Heart left ventricle (tissue), 16 donors: ENCODE measurements at regions of chr6 and their contacts with region 1.

Region 1: DNA sequence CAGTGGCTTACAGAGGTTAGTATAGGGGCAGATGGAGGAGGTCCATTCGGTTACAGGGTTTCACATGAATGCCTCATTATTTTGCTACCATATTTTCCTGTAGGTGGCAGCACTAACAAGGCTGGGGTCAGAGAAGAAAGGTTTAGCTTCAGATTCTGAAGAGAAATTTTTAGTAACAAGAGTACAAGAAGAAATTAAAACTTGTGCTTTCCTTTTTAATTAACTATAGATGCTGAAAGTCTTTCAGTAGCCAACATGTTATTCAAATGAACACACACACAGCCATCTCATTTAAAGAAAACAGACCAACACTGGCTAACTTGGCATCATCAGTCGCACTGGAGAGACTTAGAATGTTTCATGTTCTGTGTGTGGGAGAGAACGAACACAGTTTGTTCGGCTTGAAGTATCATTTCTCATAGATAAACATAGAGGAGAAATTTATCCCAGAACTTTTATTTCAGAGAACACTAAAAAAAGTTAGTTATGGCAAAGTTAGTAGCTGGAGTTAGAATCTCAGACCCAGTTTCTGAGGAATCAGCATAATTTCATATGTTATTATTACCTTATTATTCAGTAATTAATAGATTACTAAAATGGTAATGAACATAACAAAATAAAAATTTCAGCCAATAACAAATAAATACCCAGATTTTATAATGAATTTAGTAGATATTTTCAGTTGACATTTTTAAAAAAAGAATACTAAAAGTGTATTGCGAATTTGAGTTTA is 314.0 kb upstream of the RSPO3 start:
- DNase-seq: peak in 1 of 5 donors; percentile 19
- ATAC-seq: peak in 3 of 4 donors; percentile 45 to 56 (median 52)
- H3K4me3 ChIP-seq: no peak overlapping the region
- H3K27ac ChIP-seq: no peak overlapping the region
- H3K4me1 ChIP-seq: no peaks in the 10 kb centered on the region
- H3K27me3 ChIP-seq: peaks cover 0 to 11% (median 0%) of the 10 kb centered on the region in 9 donors
- CTCF ChIP-seq: peak; percentile 59 to 80 (median 68)
- POLR2A ChIP-seq: no peak

Region 2: DNA sequence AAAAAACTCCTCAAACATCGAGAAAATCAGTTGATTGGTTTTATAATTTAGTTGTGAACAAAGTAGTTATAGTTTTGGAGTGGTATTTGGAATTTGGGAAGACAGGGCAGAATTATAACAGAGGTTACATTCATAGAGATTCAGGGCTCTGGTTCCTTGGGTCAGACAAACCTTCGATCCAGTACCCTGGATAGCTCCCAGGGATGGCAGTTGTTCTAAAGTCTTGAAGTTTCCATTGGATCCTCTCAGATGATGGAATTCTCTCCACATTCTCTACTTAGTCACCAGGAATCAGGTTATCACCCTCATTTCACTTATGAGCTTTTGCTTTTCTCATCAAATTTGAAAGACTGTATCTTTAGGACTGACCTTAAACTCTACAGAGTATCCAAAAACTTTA is 179.5 kb before region 1 on chr6:
- intact Hi-C with region 1: no loop called
- DNase-seq: no peak
- ATAC-seq: no peak
- H3K4me3 ChIP-seq: no peak overlapping the region
- H3K27ac ChIP-seq: no peak overlapping the region
- H3K4me1 ChIP-seq: no peaks in the 10 kb centered on the region
- H3K27me3 ChIP-seq: no peaks in the 10 kb centered on the region
- CTCF ChIP-seq: no peak
- POLR2A ChIP-seq: no peak

Region 3: GRCh38 chr6:127186889-127187288 is 382.4 kb after region 1 on chr6:
- intact Hi-C with region 1: loop called in 5 of 10 experiments (anchors 5 to 10 kb)
- DNase-seq: peak; percentile 45 to 84 (median 64)
- ATAC-seq: peak in 1 of 4 donors; percentile 60
- H3K4me3 ChIP-seq: no peak overlapping the region
- H3K27ac ChIP-seq: no peak overlapping the region
- H3K4me1 ChIP-seq: peaks cover 0 to 9% (median 0%) of the 10 kb centered on the region in 12 donors
- H3K27me3 ChIP-seq: no peaks in the 10 kb centered on the region
- CTCF ChIP-seq: peak in 11 of 12 donors; percentile 15 to 57 (median 50)
- POLR2A ChIP-seq: no peak